HCT116 (cell line): ENCODE measurements at regions of chr7 and their contacts with region 1.

Region 1: GRCh38 chr7:150986099-150986512 is 4.7 kb upstream of the NOS3 start:
- DNase-seq: no peak
- ATAC-seq: peak; percentile 89
- H3K4me3 ChIP-seq: no peak overlapping the region
- H3K27ac ChIP-seq: no peak overlapping the region
- H3K4me1 ChIP-seq: peaks cover 0 to 11% of the 10 kb centered on the region in 2 experiments; a peak in 2 of 4 replicates
- H3K27me3 ChIP-seq: peaks cover 25% of the 10 kb centered on the region; the same call in 1 of the 2 replicates
- CTCF ChIP-seq: peak; percentile 68 to 80 (median 76)
- POLR2A ChIP-seq: no peak
- RAD21 ChIP-seq: no peak; the same call in 1 of the 2 replicates

Region 2: GRCh38 chr7:150753826-150754603 is 232.1 kb before region 1 on chr7:
- CTCF ChIA-PET with region 1: no interaction called
- POLR2A ChIA-PET with region 1: no interaction called
- RAD21 ChIA-PET with region 1: no interaction called
- intact Hi-C with region 1: no loop called
- DNase-seq: no peak
- ATAC-seq: peak; percentile 72
- H3K4me3 ChIP-seq: no peak overlapping the region
- H3K27ac ChIP-seq: no peak overlapping the region
- H3K4me1 ChIP-seq: no peaks in the 10 kb centered on the region
- H3K27me3 ChIP-seq: peaks cover 19% of the 10 kb centered on the region
- CTCF ChIP-seq: peak; percentile 13 to 26 (median 25); a peak in 5 of 6 replicates
- POLR2A ChIP-seq: no peak
- RAD21 ChIP-seq: peak; percentile 23

Region 3: DNA sequence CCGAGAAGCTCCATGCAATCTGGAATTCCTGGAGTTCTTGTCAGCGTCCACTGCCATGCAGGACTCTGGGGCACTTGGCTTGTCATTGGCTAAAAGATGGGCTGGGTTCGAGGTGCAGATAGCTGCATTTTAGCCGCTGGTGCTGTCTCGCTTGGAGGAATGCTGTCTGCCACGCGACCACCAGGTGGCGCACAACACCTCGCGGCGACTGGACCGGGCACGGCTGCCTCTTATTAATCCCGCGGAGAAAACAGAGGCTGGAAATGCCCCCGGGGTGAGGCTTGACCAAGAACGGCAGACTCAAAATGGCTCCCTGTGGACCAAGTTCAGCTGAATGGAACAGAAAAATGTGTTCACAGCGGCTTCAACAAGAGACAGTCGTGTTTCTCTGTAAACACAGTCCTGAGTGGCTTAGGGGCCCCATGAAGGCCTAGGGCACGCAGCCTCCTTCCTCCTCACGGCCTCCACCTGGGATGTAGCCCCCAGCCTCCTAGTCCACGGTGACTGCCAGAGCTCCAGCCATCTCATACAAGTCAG is 87.6 kb before region 1 on chr7:
- CTCF ChIA-PET with region 1: interaction called, 4 read pairs
- POLR2A ChIA-PET with region 1: no interaction called
- RAD21 ChIA-PET with region 1: no interaction called
- intact Hi-C with region 1: loop called (anchors 1 kb)
- DNase-seq: peak; percentile 51
- ATAC-seq: peak; percentile 95
- H3K4me3 ChIP-seq: no peak overlapping the region
- H3K27ac ChIP-seq: no peak overlapping the region
- H3K4me1 ChIP-seq: peaks cover 0 to 12% of the 10 kb centered on the region in 2 experiments; a peak in 2 of 4 replicates
- H3K27me3 ChIP-seq: no peaks in the 10 kb centered on the region
- CTCF ChIP-seq: peak; percentile 89 to 95 (median 89)
- POLR2A ChIP-seq: no peak
- RAD21 ChIP-seq: peak; percentile 89

Region 4: DNA sequence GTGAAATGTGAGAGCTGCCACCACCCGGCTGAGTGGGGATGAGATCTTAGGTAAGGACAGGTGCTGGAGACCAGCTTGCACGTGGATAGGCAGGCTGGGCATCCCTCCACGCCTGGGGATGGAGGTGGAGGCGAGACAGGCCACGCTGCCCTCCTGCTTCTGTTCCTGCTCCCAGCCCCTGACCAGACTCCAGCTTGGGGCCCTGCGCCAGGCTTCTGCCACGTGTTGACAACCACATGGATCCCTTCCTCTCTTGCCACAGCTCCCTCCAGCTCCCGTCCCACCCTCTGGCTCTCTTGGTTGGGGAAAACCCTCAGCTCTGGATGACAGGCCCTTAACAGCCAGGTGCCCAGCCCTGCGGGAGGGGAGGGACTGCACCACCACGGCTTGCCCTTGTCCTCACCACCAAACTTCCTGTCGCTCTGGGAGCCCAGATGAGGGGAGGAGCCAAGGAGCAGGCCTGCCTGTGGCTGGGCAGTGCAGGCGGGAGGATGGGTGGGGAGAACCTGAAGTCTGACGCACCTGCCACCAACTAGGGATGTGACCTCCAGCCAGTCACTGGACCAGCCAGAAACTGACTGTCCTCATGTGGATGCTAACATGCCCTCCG is 44.0 kb before region 1 on chr7:
- CTCF ChIA-PET with region 1: no interaction called
- POLR2A ChIA-PET with region 1: no interaction called
- RAD21 ChIA-PET with region 1: no interaction called
- intact Hi-C with region 1: no loop called
- DNase-seq: no peak
- ATAC-seq: peak; percentile 69
- H3K4me3 ChIP-seq: no peak overlapping the region
- H3K27ac ChIP-seq: no peak overlapping the region
- H3K4me1 ChIP-seq: peaks cover 3 to 11% of the 10 kb centered on the region in 2 experiments; a peak in 1 of 4 replicates
- H3K27me3 ChIP-seq: no peaks in the 10 kb centered on the region
- CTCF ChIP-seq: no peak
- POLR2A ChIP-seq: no peak
- RAD21 ChIP-seq: no peak

Region 5: GRCh38 chr7:151181011-151181431 is 194.9 kb after region 1 on chr7:
- CTCF ChIA-PET with region 1: no interaction called
- POLR2A ChIA-PET with region 1: no interaction called
- RAD21 ChIA-PET with region 1: no interaction called
- intact Hi-C with region 1: no loop called
- DNase-seq: no peak
- ATAC-seq: no peak
- H3K4me3 ChIP-seq: no peak overlapping the region
- H3K27ac ChIP-seq: no peak overlapping the region
- H3K4me1 ChIP-seq: no peaks in the 10 kb centered on the region
- H3K27me3 ChIP-seq: no peaks in the 10 kb centered on the region
- CTCF ChIP-seq: no peak
- POLR2A ChIP-seq: no peak
- RAD21 ChIP-seq: no peak

Region 6: GRCh38 chr7:151341357-151342101 is 355.4 kb after region 1 on chr7 and contains the start of gene NUB1:
- CTCF ChIA-PET with region 1: no interaction called
- POLR2A ChIA-PET with region 1: no interaction called
- RAD21 ChIA-PET with region 1: no interaction called
- intact Hi-C with region 1: no loop called
- DNase-seq: peak; percentile 61
- ATAC-seq: peak; percentile 95
- H3K4me3 ChIP-seq: peak within 1 kb of the TSS; percentile 65 to 69
- H3K27ac ChIP-seq: peak within 1 kb of the TSS; percentile 40
- H3K4me1 ChIP-seq: peaks cover 18 to 26% of the 10 kb centered on the region in 2 experiments
- H3K27me3 ChIP-seq: no peaks in the 10 kb centered on the region
- CTCF ChIP-seq: no peak
- POLR2A ChIP-seq: peak; percentile 38
- RAD21 ChIP-seq: no peak
- total RNA-seq, gene NUB1: 44.0 TPM